ENCODE measurements at regions of chr2 and their contacts with region 1.

Region 1: GRCh38 chr2:176582990-176583481 is 313.8 kb downstream of the MTX2 start:
- DNase-seq: peak in 3 of 5 donors; percentile 10 to 51 (median 28)
- ATAC-seq: peak in 3 of 4 donors; percentile 39 to 94 (median 77)
- H3K4me3 ChIP-seq: no peak overlapping the region
- H3K27ac ChIP-seq: peak overlapping the region in 3 of 12 donors; percentile 6 to 28 (median 18)
- H3K4me1 ChIP-seq: peaks cover 0 to 6% (median 0%) of the 10 kb centered on the region in 12 donors
- H3K27me3 ChIP-seq: peaks cover 0 to 8% (median 0%) of the 10 kb centered on the region in 9 donors
- CTCF ChIP-seq: no peak
- POLR2A ChIP-seq: no peak

Region 2: DNA sequence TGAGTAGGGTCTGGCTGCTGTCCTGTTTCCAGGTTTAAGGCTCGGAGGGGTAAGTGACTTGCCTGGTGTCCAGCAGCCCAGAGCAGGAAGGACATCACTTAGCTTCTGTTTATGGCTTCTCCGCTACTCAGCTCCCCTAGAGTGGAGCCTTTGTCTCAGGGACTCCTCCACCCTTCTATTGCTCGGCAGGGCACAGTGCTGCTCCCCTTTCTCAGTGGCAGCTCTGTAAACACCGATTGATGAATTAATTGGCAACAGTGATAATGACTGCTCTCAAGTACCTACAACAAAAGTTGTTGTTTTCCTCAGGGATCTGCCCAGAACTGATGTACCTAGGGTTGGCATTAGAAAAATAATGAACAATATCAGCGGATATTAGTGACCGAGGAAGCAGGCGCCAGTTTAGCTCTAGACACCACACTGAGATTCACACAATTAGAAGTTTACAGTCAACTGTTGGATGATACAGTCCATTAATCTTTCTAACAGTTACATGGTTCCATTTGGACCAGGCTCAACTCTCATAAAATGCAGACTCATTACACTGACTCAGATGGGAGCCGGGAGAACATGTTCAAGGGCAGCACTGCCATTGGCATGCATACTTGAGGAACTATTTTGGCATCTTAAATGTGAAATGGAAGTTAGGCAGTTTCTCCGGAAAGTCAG is 48.1 kb before region 1 on chr2:
- intact Hi-C with region 1: loop called in 1 of 10 experiments (anchors 2 kb)
- DNase-seq: no peak
- ATAC-seq: peak in 2 of 4 donors; percentile 34 to 81
- H3K4me3 ChIP-seq: no peak overlapping the region
- H3K27ac ChIP-seq: no peak overlapping the region
- H3K4me1 ChIP-seq: peaks cover 0 to 2% (median 0%) of the 10 kb centered on the region in 12 donors
- H3K27me3 ChIP-seq: peaks cover 0 to 6% (median 0%) of the 10 kb centered on the region in 9 donors
- CTCF ChIP-seq: no peak
- POLR2A ChIP-seq: no peak

Region 3: DNA sequence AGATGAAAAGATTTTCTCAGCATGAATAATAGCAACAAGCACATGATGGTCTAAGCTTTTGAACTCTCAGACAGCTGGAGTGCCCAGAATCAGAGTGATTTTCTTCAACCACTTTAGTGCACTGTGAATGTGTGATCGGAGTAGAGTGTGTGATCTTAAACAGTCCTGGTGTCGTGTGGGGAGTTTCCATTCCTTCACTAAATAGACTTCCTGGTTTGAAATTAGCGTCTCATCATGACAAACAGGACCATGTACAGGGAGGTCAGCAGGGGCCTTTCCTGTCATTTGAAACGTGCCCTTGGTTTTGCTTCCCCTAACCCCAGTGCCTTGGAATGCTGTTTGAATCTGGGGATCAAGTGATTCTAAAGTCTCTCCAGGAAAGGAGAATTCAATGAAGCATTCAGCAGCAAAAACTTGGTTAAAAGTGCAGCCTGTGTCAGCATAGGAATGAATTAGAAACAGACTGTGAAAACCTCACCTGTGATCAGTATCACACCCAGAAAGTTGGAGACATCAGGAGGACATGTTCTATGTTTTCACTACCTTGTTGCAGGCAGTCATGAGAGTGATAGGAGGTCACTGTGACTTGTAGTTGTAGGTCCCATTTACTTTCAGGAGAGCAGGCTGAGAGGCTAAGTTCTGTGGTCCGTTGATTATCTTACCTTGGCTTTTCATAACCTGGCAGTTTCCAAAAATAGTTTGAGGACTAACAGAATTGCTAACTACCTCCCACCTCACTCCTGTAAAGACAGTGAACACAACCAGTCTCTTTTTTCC is 86.5 kb after region 1 on chr2:
- intact Hi-C with region 1: no loop called
- DNase-seq: no peak
- ATAC-seq: peak in 3 of 4 donors; percentile 22 to 81 (median 44)
- H3K4me3 ChIP-seq: no peak overlapping the region
- H3K27ac ChIP-seq: peak overlapping the region in 6 of 12 donors; percentile 10 to 74 (median 34)
- H3K4me1 ChIP-seq: peaks cover 0 to 17% (median 2%) of the 10 kb centered on the region in 12 donors
- H3K27me3 ChIP-seq: peaks cover 0 to 6% (median 0%) of the 10 kb centered on the region in 9 donors
- CTCF ChIP-seq: no peak
- POLR2A ChIP-seq: no peak

Measured in heart left ventricle (tissue), 16 donors.